PC-3 (cell line): ENCODE measurements at regions of chr1 and their contacts with region 1.

Region 1: GRCh38 chr1:55428944-55429931 is 214.1 kb upstream of the USP24 start:
- DNase-seq: peak; percentile 99
- ATAC-seq: peak; percentile 87
- H3K4me3 ChIP-seq: no peak overlapping the region
- H3K27ac ChIP-seq: peak overlapping the region; percentile 99
- H3K4me1 ChIP-seq: peaks cover 46% of the 10 kb centered on the region
- H3K27me3 ChIP-seq: no peaks in the 10 kb centered on the region
- CTCF ChIP-seq: no peak

Region 2: GRCh38 chr1:55310505-55310971 is 118.7 kb before region 1 on chr1:
- CTCF ChIA-PET with region 1: no interaction called
- POLR2A ChIA-PET with region 1: no interaction called
- intact Hi-C with region 1: loop called (anchors 1 kb)
- DNase-seq: peak; percentile 96
- ATAC-seq: peak; percentile 98
- H3K4me3 ChIP-seq: peak overlapping the region; percentile 22; the same call in 1 of the 2 replicates
- H3K27ac ChIP-seq: peak overlapping the region; percentile 90
- H3K4me1 ChIP-seq: peaks cover 28% of the 10 kb centered on the region
- H3K27me3 ChIP-seq: no peaks in the 10 kb centered on the region
- CTCF ChIP-seq: no peak

Region 3: DNA sequence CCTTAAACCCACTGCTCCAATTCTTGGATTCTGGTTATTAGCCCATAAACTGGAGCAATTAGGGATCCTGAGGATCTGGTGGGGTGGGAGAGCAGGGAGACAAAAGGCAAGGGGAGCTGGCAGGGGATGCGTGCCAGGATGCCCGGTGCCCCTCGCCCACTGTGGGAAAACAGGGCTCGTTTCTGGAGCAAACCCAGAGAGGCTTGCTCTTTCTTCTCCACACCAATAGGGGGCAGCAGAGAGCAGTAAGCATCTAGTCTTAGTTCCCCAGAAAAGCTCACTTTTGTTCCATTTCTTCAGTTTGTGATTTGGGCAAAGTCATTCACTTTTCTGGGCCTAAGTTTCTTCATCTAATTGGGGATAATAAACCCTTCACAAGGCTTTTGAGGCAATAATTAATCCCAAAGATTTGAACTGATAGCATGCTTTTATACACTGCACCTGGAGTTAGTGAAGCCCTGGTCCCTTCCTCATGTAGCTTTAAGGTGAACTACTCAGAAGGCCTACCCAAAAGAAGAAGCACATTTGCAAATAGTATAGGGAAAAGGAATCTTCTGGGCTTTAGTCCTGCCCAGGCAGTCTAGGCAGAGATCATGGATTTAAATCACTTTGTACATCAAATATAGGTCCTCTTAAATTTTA is 53.5 kb before region 1 on chr1:
- CTCF ChIA-PET with region 1: interaction called, 5 read pairs
- POLR2A ChIA-PET with region 1: no interaction called
- intact Hi-C with region 1: loop called (anchors 1 kb)
- DNase-seq: peak; percentile 58
- ATAC-seq: peak; percentile 21
- H3K4me3 ChIP-seq: no peak overlapping the region; the same call in 1 of the 2 replicates
- H3K27ac ChIP-seq: peak overlapping the region; percentile 90
- H3K4me1 ChIP-seq: peaks cover 49% of the 10 kb centered on the region
- H3K27me3 ChIP-seq: no peaks in the 10 kb centered on the region
- CTCF ChIP-seq: peak; percentile 95

Region 4: GRCh38 chr1:55478742-55479141 is 49.5 kb after region 1 on chr1:
- CTCF ChIA-PET with region 1: no interaction called
- POLR2A ChIA-PET with region 1: no interaction called
- intact Hi-C with region 1: loop called (anchors 2 kb)
- DNase-seq: peak; percentile 79
- ATAC-seq: peak; percentile 58
- H3K4me3 ChIP-seq: no peak overlapping the region
- H3K27ac ChIP-seq: no peak overlapping the region
- H3K4me1 ChIP-seq: peaks cover 13% of the 10 kb centered on the region
- H3K27me3 ChIP-seq: no peaks in the 10 kb centered on the region
- CTCF ChIP-seq: peak; percentile 70

Region 5: GRCh38 chr1:55685560-55685959 is 256.3 kb after region 1 on chr1:
- CTCF ChIA-PET with region 1: no interaction called
- POLR2A ChIA-PET with region 1: no interaction called
- intact Hi-C with region 1: loop called (anchors 1 kb)
- DNase-seq: no peak
- ATAC-seq: no peak
- H3K4me3 ChIP-seq: no peak overlapping the region
- H3K27ac ChIP-seq: 0 out of 2 replicates have a peak overlapping the region, but pooled peaks have one; percentile 88
- H3K4me1 ChIP-seq: peaks cover 23% of the 10 kb centered on the region
- H3K27me3 ChIP-seq: no peaks in the 10 kb centered on the region
- CTCF ChIP-seq: no peak

Region 6: DNA sequence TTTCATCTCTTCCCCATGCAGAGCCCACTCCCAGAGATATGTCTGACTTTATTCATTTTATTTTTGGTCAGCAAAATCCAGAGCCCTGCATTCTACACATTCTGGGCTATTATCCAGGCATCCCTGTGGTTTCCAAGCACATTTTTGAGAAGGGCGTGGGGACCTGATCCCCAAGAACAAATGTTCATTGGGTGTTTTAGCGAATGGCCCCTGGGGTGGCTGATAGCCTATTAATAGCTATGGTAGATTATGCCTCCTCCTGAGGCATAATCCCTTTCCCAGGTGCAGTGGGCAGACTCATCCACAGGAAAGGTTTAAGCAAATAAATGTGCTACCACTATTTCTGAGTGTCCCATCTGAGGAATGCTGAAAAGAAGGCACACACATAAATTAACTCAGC is 297.8 kb after region 1 on chr1:
- CTCF ChIA-PET with region 1: no interaction called
- POLR2A ChIA-PET with region 1: no interaction called
- intact Hi-C with region 1: no loop called
- DNase-seq: peak; percentile 93
- ATAC-seq: peak; percentile 62
- H3K4me3 ChIP-seq: no peak overlapping the region
- H3K27ac ChIP-seq: peak overlapping the region; percentile 89
- H3K4me1 ChIP-seq: peaks cover 35% of the 10 kb centered on the region
- H3K27me3 ChIP-seq: no peaks in the 10 kb centered on the region
- CTCF ChIP-seq: no peak